Naive thymus-derived CD8-positive, alpha-beta T cell (primary cell): ENCODE measurements at regions of chr6 and their contacts with region 1.

Region 1: DNA sequence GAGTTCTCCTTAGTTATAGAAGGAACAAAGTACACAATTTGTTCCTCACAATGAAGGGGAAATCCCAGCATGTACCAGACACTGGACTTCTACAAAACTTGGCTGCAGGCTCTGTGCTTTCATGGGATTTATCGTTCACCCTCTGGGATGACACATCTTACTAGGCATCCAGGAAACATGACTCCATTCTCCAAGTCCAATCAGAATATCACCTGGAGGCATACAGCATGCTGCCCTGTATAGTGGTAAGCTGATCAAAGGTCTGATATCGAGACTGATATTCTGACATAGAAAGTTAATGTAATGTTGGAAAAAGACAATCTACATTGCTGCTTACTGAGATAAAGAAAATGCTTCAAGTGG is 6.7 kb downstream of the RWDD2A start:
- DNase-seq: no peak
- ATAC-seq: no peak
- H3K4me3 Mint-ChIP-seq: no peak overlapping the region
- H3K27ac Mint-ChIP-seq: no peak overlapping the region
- H3K4me1 Mint-ChIP-seq: peaks cover 0 to 11% (median 6%) of the 10 kb centered on the region in 4 donors
- H3K27me3 Mint-ChIP-seq: no peaks in the 10 kb centered on the region

Region 2: GRCh38 chr6:83231146-83231545 is 31.3 kb after region 1 on chr6:
- POLR2A ChIA-PET with region 1: interaction called, 11 read pairs
- DNase-seq: no peak
- ATAC-seq: no peak
- H3K4me3 Mint-ChIP-seq: no peak overlapping the region
- H3K27ac Mint-ChIP-seq: no peak overlapping the region
- H3K4me1 Mint-ChIP-seq: no peaks in the 10 kb centered on the region
- H3K27me3 Mint-ChIP-seq: peaks cover 7 to 18% (median 11%) of the 10 kb centered on the region in 5 donors